ENCODE measurements at regions of chr6 and their contacts with region 1.

Region 1: GRCh38 chr6:31971993-31972708 is at the start of gene DXO:
- DNase-seq: peak; percentile 99
- ATAC-seq: peak; percentile 91
- H3K4me3 Mint-ChIP-seq: peak within 1 kb of the TSS; percentile 96
- H3K27ac Mint-ChIP-seq: peak within 1 kb of the TSS; percentile 100
- H3K4me1 Mint-ChIP-seq: peaks cover 34% of the 10 kb centered on the region
- H3K27me3 Mint-ChIP-seq: no peaks in the 10 kb centered on the region
- total RNA-seq, gene DXO: 17.4 to 18.7 TPM

Region 2: DNA sequence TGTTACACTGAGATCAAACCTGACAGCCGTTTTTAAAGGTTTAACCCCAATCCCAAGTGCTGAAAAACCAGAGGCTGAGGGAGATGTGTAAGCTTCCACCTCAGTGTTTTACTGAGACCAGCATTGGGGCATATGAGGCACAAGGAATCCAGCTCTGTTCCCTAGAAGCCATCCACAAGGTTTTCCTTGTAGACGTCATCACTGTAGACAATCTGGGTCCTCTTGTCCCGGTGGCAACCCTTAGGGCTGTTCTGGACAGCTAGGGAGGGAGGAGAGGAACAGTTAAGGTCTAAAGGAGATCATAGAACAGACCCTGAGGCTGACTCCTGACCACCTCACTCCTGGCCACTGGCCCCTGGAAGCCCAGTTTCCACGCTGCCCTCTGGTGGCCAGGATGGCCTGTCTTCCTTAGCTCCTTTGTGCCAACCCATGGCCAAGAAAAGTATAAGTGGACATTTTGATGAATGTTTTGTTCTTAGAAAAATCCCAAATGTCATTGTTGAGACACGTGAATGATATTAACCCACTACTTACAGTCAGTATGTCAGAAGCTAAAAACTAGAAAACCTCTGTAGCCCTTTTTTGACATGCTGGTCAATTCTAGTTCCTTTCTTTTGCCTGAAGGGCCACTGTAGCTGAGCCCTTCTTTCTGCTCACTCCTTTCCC is 19.9 kb before region 1 on chr6:
- CTCF ChIA-PET with region 1: interaction called, 12 read pairs
- DNase-seq: peak; percentile 51
- ATAC-seq: peak; percentile 63
- H3K4me3 Mint-ChIP-seq: no peak overlapping the region
- H3K27ac Mint-ChIP-seq: no peak overlapping the region
- H3K4me1 Mint-ChIP-seq: peaks cover 4% of the 10 kb centered on the region
- H3K27me3 Mint-ChIP-seq: no peaks in the 10 kb centered on the region

Region 3: DNA sequence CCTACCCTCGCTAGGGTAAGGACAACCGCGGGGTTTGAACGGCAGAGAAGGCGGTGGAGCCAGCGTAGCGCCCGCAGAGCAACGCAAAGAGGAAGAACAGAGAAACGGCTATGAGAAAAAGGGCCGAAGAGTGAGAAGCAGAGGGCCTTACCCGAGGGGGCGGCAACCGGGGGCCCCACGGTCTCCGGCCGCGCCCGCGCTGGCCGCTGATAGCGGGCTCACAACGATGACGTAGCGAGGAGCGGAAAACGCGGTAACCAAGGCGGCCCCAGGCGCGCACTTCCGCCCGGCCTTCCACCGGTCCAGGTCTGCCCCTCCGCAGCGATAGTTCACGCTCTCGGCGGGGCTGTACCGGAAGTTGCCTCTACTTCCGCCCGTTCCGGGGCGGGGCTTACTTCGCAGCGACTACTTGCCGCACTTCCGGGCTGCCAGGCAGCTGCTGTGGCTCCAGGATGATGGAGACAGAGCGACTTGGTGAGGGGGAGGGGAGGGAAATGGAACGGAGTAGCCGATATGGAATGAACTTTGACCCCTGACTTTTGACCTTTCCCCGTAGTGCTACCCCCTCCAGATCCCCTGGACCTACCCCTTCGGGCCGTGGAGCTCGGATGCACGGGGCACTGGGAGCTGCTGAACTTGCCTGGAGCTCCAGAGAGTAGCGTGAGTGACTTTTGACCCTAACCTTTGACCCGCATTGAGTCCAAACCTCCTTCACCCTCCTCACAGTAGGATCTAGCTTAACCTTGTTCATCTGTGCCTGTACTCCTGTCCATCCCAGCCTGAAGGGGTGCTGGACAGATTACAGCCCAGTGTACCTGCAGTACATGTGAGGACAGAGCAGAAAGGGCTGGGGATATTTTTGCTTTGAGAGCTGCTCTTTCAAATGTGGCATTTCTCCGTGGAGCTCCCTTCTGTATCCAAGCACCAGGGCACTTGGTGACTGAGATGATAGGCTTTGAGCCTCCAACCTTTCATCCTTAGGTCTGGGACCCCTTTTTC is 13.1 kb before region 1 on chr6 and contains the starts of genes NELFE and SKIC2:
- CTCF ChIA-PET with region 1: interaction called, 27 read pairs
- DNase-seq: peak; percentile 99
- ATAC-seq: peak; percentile 98
- H3K4me3 Mint-ChIP-seq: peak within 1 kb of the TSS; percentile 95
- H3K27ac Mint-ChIP-seq: peak within 1 kb of the TSS; percentile 99
- H3K4me1 Mint-ChIP-seq: peaks cover 35% of the 10 kb centered on the region
- H3K27me3 Mint-ChIP-seq: no peaks in the 10 kb centered on the region
- total RNA-seq, gene NELFE: 75.7 to 79.7 TPM
- total RNA-seq, gene SKIC2: 88.2 to 93.2 TPM